Transverse colon (tissue), 4 donors: ENCODE measurements at regions of chr1 and their contacts with region 1.

Region 1: GRCh38 chr1:71521655-71522264 is 440.9 kb upstream of the ZRANB2 start:
- DNase-seq: peak; percentile 58
- H3K4me3 ChIP-seq: no peak overlapping the region
- H3K27ac ChIP-seq: no peak overlapping the region
- H3K4me1 ChIP-seq: no peaks in the 10 kb centered on the region
- H3K27me3 ChIP-seq: no peaks in the 10 kb centered on the region
- CTCF ChIP-seq: peak; percentile 47 to 66 (median 63)
- EP300 ChIP-seq: no peak
- POLR2A ChIP-seq: no peak

Region 2: DNA sequence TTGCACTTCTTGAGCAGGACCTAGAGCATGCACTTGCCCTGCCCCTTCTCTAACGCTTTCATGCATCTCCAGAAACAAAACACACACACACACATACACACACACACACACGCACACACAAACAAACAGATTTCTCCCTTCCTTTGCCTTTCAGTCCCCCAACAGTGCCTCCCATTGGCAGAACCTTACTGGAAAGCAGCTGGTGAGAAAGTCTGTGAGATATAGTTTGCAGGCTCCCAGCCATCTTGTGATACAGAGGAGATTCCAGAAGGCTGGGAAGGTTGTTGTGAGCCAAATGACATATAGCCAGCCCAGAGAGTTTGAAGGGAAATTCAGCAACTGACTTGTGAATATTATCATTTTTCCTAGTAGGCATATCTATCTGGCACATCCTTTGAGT is 405.0 kb before region 1 on chr1:
- in situ Hi-C with region 1: loop called in 1 of 4 experiments (anchors 25 kb)
- intact Hi-C with region 1: no loop called
- DNase-seq: no peak
- H3K4me3 ChIP-seq: no peak overlapping the region
- H3K27ac ChIP-seq: no peak overlapping the region
- H3K4me1 ChIP-seq: no peaks in the 10 kb centered on the region
- H3K27me3 ChIP-seq: no peaks in the 10 kb centered on the region
- CTCF ChIP-seq: no peak
- EP300 ChIP-seq: no peak
- POLR2A ChIP-seq: no peak

Region 3: DNA sequence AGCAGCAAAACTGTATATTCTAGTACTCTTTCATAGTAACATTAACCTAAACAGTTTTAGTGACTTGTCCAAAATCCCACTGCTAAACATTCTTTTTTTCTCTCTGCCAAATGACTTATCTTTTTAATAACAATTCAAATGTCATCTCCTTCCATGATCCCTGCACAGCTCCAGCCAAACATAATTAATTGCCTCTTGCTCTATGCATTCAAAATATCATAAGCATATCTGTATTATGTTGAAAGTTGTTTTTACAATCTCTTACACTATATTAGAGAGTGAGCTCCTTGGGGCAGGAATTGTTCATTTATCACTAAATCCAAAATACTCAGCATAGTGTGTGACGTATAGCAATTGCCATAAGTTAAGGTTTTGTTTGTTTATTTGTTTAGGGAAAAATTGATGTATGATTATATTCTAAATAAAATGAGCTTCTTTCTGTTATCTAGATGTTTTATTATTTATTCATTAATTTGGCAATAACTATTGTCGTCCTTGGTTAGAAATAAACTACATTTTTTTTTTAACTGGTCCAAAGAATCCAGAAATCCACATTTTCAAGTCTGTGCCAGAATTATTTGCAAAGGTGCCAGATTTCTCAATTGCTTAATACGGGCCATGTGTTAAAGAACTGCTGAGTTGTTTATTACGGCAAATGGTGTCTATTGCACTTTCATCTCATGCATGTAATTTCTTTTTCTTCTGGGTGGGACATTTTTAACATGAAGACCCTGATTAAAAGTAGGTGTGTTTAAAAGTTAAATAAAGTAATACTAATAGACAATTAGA is 136.3 kb after region 1 on chr1:
- in situ Hi-C with region 1: no loop called
- intact Hi-C with region 1: no loop called
- DNase-seq: no peak
- H3K4me3 ChIP-seq: no peak overlapping the region
- H3K27ac ChIP-seq: no peak overlapping the region
- H3K4me1 ChIP-seq: peaks cover 0 to 6% (median 2%) of the 10 kb centered on the region in 4 donors
- H3K27me3 ChIP-seq: no peaks in the 10 kb centered on the region
- CTCF ChIP-seq: no peak
- EP300 ChIP-seq: no peak
- POLR2A ChIP-seq: no peak